BJ (cell line): ENCODE measurements at regions of chr19 and their contacts with region 1.

Region 1: GRCh38 chr19:4909897-4910593 is 744 bp downstream of the UHRF1 start:
- DNase-seq: no peak
- H3K4me3 ChIP-seq: peak overlapping the region; percentile 55
- H3K27me3 ChIP-seq: no peaks in the 10 kb centered on the region
- CTCF ChIP-seq: no peak

Region 2: DNA sequence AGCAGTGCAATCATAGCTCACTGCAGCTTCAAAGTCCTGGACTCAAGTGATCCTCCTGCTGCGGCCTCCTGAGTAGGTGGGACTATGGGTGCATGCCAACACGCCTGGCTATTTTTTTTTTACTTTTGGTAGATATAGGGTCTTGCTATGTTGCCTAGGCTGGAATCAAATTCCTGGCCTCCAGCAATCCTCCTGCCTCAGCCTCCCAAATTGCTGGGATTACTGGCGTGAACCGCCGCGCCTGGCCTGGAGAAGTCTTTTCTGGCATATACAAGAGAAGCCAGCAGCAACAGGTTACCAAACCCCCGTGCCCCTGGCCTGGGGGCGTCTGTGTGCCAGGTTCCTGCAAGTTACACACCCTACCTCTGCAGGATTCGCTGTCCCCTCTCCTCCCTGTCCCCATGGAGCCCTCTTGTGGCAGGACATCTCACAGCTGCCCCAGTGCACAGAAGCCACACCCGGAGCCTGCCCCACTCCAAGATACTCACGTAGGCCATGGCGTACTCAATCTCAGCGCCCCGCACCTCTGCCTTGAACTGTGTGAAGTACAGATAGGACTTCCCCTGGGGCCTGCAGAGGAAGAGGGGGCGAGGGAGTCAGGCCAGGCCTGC is 249.8 kb before region 1 on chr19:
- CTCF ChIA-PET with region 1: no interaction called
- POLR2A ChIA-PET with region 1: no interaction called
- DNase-seq: no peak
- H3K4me3 ChIP-seq: no peak overlapping the region
- H3K27me3 ChIP-seq: no peaks in the 10 kb centered on the region
- CTCF ChIP-seq: no peak

Region 3: DNA sequence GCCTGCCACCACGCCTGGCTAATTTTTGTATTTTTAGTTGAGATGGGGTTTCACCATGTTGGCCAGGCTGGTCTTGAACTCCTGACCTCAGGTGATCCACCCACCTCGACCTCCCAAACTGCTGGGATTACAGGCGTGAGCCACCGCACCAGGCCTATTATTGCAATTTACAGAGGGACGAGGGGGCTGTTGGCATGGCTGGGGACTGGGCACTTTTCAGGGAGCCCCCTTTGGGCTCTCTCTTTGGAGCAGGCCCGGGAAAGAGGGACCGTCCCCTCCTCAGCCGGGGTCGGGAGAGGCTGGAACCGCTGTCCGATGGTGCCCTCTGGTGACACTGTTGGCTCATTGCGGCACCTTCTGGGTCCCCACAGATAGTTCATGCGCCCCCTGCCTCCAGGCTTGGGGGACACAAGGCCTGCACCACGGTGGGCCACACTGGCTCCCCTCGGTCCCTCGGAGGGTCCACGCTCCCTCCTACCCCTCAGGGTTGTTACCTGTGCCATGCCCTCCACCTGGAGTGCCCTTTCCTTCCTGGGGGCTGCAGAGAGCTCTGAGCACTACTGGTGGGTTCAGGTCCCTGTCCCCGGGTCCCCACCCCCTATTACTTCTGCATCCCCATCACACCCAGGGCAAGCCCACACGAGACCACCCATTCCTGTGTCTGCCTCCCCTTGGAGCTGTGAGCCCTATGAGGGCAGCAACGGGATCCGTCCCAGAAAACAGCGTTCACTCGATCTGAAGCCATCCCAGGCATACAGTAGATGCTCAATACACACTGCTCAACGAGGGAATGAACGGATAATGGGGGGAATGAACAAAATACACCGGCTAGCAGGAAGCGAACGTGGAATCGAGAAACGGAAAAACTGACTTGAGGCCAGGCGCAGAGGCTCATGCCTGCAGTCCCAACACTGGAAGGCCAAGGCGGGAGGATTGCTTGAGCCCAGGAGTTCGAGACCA is 106.0 kb before region 1 on chr19:
- CTCF ChIA-PET with region 1: interaction called, 133 read pairs
- POLR2A ChIA-PET with region 1: no interaction called
- DNase-seq: no peak
- H3K4me3 ChIP-seq: no peak overlapping the region
- H3K27me3 ChIP-seq: no peaks in the 10 kb centered on the region
- CTCF ChIP-seq: peak; percentile 85

Region 4: DNA sequence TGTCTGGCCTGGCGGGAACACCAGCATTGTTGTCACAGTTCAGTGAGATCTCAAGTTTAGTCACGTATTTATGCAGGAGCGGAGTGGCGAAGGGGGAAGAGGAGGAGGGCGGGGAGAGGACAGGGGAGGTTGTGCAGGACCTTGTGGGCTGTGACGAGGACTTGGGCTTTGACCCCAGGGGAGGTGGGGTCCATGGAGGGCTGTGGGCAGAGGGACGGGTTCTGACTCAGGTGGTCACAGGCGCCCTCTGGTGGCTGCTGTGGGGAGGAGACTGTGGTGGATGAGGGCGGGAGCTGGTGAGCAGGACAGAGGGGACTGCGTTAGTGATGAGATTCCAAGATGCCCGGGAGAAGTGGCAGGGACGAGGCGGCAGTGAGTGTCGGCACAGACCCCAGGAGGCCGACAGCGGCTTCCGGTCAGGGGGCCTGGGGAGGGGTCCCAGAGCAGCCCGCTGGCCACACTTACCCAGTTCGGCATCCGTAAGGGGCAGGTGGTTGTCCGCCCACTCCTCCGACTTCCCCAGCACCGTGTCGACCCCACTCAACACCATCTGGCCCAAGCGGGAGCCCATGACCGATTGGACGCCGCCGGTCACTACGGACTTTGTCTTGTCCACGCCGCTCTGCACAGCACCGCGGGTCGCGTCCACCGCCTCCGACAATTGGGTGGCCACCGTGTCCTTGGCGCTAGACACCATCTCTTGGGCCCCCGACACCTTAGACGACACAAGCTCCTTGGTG is 58.3 kb before region 1 on chr19:
- CTCF ChIA-PET with region 1: interaction called, 16 read pairs
- POLR2A ChIA-PET with region 1: no interaction called
- DNase-seq: no peak
- H3K4me3 ChIP-seq: no peak overlapping the region
- H3K27me3 ChIP-seq: no peaks in the 10 kb centered on the region
- CTCF ChIP-seq: peak; percentile 88

Region 5: DNA sequence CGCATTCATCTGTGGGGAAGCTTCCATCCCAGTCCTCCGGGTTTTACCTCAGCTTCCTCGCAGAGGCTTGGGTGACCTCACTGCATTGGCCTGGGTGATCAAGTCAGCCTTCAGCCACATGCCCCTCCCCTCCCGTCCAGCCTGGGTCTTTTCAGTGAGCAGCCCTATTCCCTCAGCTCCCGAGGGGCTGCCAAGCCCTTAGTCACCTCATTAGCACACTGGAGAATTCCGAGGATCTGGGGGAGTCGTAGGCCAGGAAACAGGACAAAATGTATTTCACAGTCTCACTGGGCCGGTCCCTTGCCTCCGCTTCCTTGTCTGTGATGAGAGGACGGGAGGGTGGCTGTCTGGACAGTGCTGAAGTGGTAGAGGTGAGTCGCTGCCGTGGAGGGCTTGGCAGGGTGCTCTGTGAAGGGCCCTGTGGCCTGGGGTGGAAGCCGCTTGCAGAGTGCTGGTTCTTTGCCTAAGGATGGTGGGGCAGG is 78.8 kb after region 1 on chr19:
- CTCF ChIA-PET with region 1: interaction called, 3 read pairs
- POLR2A ChIA-PET with region 1: interaction called, 20 read pairs
- DNase-seq: peak; percentile 53
- H3K4me3 ChIP-seq: no peak overlapping the region
- H3K27me3 ChIP-seq: no peaks in the 10 kb centered on the region
- CTCF ChIP-seq: no peak